Activated naive CD8-positive, alpha-beta T cell treated with anti-CD3 and anti-CD28 coated beads, Interleukin-2, amount 10 ng/mL, durations not matched to agents 7 days and 5 days (primary cell): ENCODE measurements at regions of chr3 and their contacts with region 1.

Region 1: DNA sequence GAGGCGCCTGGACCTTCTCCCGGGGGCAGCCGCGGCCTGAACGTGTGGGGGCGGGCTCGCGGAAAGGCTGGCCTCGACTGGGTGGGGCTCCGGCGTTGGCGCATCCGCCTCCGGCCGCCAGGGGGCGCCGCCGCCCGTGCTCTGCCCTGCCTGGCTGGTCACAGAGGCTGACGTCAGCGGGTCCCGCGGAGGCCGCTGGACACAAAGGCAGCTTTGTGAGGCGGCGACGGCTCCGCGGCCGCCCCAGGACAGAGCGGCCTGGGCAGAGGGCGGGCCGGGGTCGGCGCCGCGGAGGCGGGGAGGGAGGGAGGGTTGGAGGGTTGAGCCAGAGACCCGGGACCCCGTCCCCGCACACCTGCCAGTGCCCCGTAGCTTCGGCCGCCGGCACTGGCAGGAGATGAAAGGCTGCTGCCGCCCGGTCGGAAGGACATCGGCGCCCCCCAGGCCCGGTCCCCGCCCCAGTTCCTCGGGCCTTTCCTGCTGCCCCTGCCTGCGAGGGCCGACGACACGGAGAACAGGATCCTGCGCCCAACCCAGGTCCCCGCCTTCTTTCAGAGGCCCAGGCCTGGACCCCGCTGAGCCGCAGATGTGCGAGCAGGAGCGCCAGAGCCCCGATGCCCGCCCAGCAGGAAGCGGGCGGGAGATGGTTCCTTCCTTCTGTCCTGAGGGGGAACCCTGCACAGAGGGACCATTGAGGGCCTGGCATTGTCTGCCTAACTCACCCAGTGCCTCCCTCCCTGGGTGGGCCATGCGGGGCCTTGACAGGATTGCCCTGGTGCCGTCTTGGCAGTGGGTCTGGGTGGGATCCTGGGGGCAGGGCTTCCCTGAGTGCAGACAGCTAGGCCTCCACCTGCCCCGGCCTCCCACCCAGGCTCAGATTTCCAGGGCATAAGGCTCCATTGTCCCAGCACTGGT is 8.7 kb upstream of the SEMA3B start:
- DNase-seq: peak; percentile 93
- ATAC-seq: peak; percentile 94
- H3K4me3 Mint-ChIP-seq: peak overlapping the region; percentile 72
- H3K27ac Mint-ChIP-seq: peak overlapping the region; percentile 90
- H3K4me1 Mint-ChIP-seq: peaks cover 5% of the 10 kb centered on the region
- H3K27me3 Mint-ChIP-seq: no peaks in the 10 kb centered on the region

Region 2: DNA sequence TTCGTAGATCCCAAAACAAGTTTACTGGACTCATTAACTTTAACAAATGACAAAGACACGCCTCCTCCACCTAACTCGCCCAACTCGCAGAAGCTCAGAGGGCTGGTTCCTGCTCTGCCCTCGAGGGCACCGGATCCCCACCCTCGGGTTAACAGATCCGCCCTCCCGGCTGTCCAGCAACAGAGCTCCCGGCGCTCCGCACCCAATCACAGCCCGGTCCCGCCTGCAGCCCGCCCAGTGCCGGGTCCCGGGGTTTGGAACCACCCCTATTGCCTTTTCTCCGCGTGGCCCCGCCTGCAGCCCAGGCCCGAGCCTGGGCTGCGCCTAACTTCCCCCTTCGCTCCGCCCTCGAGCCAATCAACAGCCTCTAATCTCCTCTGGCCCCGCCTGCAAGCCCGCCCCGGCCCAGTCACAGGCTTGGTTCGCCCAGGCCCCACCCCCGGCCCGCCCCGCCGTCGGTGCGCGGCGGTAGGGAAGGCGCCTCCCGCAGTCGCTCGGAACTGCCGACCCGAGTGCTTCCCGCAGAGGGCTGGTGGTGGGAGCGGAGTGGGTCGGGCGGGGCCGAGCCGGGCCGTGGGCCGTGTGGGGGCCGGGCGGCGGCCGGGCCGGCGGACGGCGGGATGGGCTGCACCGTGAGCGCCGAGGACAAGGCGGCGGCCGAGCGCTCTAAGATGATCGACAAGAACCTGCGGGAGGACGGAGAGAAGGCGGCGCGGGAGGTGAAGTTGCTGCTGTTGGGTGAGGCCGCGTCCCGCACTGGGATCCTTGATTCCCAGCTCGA is 24.4 kb before region 1 on chr3 and contains the start of gene GNAI2:
- POLR2A ChIA-PET with region 1: interaction called, 11 read pairs
- DNase-seq: peak; percentile 98
- ATAC-seq: peak; percentile 90
- H3K4me3 Mint-ChIP-seq: peak within 1 kb of the TSS; percentile 100
- H3K27ac Mint-ChIP-seq: peak within 1 kb of the TSS; percentile 99
- H3K4me1 Mint-ChIP-seq: peaks cover 22% of the 10 kb centered on the region
- H3K27me3 Mint-ChIP-seq: no peaks in the 10 kb centered on the region
- total RNA-seq, gene GNAI2: 435 to 448 TPM

Region 3: GRCh38 chr3:50275996-50276761 is 15.9 kb after region 1 on chr3:
- POLR2A ChIA-PET with region 1: interaction called, 10 read pairs
- DNase-seq: peak; percentile 60
- ATAC-seq: no peak
- H3K4me3 Mint-ChIP-seq: peak overlapping the region; percentile 50
- H3K27ac Mint-ChIP-seq: no peak overlapping the region
- H3K4me1 Mint-ChIP-seq: peaks cover 25% of the 10 kb centered on the region
- H3K27me3 Mint-ChIP-seq: peaks cover 40% of the 10 kb centered on the region

Region 4: DNA sequence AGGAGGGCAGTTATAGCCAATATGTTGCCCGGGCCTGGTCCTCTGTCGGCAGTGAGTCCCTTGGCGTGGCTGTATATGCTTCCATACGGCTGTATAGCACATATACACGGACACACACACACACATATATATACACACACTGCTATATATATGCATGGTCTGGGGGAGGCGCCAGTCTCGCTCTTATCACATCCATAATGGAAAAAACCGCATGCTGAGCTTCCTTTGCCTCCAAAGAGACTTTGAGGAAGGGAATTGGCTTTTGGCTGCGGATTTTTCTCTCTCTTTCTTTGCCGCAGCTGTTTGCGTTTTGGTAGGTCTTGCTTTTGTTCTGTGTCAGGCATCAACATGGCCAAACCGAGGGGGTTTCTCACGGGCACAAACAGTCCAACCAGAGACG is 110.3 kb after region 1 on chr3:
- POLR2A ChIA-PET with region 1: no interaction called
- DNase-seq: no peak
- ATAC-seq: no peak
- H3K4me3 Mint-ChIP-seq: no peak overlapping the region
- H3K27ac Mint-ChIP-seq: no peak overlapping the region
- H3K4me1 Mint-ChIP-seq: peaks cover 9% of the 10 kb centered on the region
- H3K27me3 Mint-ChIP-seq: peaks cover 1% of the 10 kb centered on the region

Region 5: GRCh38 chr3:50427984-50428633 is 167.8 kb after region 1 on chr3:
- POLR2A ChIA-PET with region 1: no interaction called
- DNase-seq: no peak
- ATAC-seq: peak; percentile 54
- H3K4me3 Mint-ChIP-seq: no peak overlapping the region
- H3K27ac Mint-ChIP-seq: no peak overlapping the region
- H3K4me1 Mint-ChIP-seq: peaks cover 4% of the 10 kb centered on the region
- H3K27me3 Mint-ChIP-seq: no peaks in the 10 kb centered on the region